Activated CD4-positive, alpha-beta T cell treated with anti-CD3 and anti-CD28 coated beads, Interleukin-2, amount 10 ng/mL, durations not matched to agents 24 days and 14 days (primary cell): ENCODE measurements at regions of chr4 and their contacts with region 1.

Region 1: GRCh38 chr4:38319456-38320342 is 344.3 kb upstream of the KLF3 start:
- DNase-seq: peak; percentile 97
- H3K4me3 Mint-ChIP-seq: peak overlapping the region; percentile 77
- H3K27ac Mint-ChIP-seq: peak overlapping the region; percentile 81
- H3K4me1 Mint-ChIP-seq: peaks cover 29% of the 10 kb centered on the region
- H3K27me3 Mint-ChIP-seq: peaks cover 20% of the 10 kb centered on the region

Region 2: GRCh38 chr4:38179690-38180377 is 139.9 kb before region 1 on chr4:
- intact Hi-C with region 1: loop called (anchors 1 kb)
- DNase-seq: peak; percentile 92
- H3K4me3 Mint-ChIP-seq: no peak overlapping the region
- H3K27ac Mint-ChIP-seq: no peak overlapping the region
- H3K4me1 Mint-ChIP-seq: peaks cover 30% of the 10 kb centered on the region
- H3K27me3 Mint-ChIP-seq: peaks cover 17% of the 10 kb centered on the region

Region 3: GRCh38 chr4:38334810-38335537 is 15.3 kb after region 1 on chr4:
- intact Hi-C with region 1: loop called (anchors 1 kb)
- DNase-seq: no peak
- H3K4me3 Mint-ChIP-seq: peak overlapping the region; percentile 6
- H3K27ac Mint-ChIP-seq: peak overlapping the region; percentile 3
- H3K4me1 Mint-ChIP-seq: peaks cover 17% of the 10 kb centered on the region
- H3K27me3 Mint-ChIP-seq: peaks cover 44% of the 10 kb centered on the region

Region 4: DNA sequence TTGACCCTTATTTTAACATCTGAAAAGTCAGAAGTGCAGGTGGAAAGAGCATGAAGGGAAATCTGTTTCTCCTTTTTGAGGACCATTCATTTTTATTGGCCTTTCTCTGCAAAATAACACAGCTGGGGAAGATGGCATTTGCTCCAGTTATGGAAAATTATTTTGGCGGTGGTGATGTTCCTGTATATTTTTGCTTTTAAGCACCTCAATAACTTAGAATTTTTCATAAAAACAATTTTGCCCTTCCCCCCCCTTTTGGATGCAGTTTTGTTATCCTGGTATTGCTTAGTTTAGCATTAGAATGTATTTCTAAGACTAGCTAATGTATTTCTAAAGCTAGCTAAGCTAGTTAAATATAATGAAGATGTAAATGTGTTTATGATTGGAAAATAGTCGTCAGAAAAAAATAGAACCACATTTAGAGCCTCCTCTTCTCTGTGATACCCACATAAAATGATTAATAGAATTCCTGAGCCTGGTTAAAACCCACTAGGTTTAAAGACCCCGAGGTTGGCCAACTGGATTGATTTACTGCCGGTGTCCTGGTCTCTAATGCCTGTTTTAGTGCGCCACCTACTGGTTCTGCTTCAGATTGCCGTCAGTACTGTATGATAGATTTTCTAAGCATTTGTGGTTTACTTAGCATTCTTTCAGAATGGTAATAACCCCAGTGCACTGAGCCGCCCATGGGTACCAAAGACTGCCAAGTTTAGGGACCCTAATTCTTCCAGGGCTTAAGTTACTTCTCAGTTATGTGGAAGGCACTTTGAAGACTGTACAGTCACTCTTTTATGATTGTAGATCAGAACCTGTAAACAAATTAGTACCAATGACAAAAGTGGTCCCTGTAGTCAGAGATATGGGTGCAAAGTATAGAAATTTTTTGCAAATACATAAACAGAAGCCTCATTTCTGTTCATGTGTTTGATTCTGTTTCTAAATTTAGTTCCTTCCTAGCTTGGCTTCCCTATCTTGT is 355.7 kb after region 1 on chr4:
- intact Hi-C with region 1: loop called (anchors 1 kb)
- DNase-seq: peak; percentile 94
- H3K4me3 Mint-ChIP-seq: no peak overlapping the region
- H3K27ac Mint-ChIP-seq: no peak overlapping the region
- H3K4me1 Mint-ChIP-seq: peaks cover 57% of the 10 kb centered on the region
- H3K27me3 Mint-ChIP-seq: peaks cover 9% of the 10 kb centered on the region

Region 5: DNA sequence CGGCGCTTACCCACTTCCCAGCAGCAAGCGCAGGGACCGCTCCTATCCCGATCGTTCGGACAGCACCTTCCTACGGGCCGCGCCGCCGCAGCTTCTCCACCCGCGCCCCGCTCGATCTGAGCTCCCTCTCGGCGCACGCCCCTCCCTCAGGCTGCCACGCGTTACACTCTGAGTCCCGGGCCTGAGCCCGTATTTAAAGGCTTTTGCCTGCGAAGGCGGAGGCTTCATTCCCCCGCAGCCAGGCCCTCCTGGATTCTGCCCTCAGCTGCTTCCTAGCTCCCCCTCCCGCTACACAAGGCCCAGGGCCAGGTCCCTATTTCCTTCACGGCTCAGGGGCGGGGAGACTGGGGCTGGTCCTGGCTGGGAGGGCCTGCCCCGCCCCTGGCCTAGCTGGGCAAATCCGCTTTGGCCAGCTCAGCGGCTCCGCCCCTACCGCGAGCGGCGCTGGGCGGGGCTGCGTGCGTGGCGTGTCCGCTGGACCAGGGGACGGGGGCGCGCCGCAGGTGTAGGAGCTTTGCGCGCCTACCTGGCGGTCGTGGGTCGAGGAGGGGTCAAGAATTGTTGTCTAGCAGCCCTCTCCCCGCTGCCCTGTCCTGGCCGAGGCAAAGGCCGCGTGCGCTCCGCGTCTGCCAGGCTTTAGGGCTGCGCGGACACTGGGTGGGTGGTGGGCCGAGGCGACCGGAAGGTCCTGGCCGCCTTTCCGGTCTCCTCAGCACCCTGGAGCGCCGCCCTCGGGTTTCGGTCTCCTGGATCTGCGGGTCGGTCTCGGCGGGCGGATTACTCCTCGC is 1207.8 kb after region 1 on chr4 and contains the start of gene UGDH:
- intact Hi-C with region 1: loop called (anchors 10 kb)
- DNase-seq: peak; percentile 99
- H3K4me3 Mint-ChIP-seq: peak within 1 kb of the TSS; percentile 98
- H3K27ac Mint-ChIP-seq: peak within 1 kb of the TSS; percentile 95
- H3K4me1 Mint-ChIP-seq: peaks cover 20% of the 10 kb centered on the region
- H3K27me3 Mint-ChIP-seq: no peaks in the 10 kb centered on the region
- total RNA-seq, gene UGDH: 23.1 and 29.2 TPM in 2 replicates